Transverse colon (tissue), 4 donors: ENCODE measurements at regions of chr16 and their contacts with region 1.

Region 1: GRCh38 chr16:8797364-8798173 is at the starts of genes PMM2 and TMEM186:
- DNase-seq: peak; percentile 97
- H3K4me3 ChIP-seq: peak within 1 kb of the TSS; percentile 72 to 91 (median 84)
- H3K27ac ChIP-seq: peak within 1 kb of the TSS; percentile 86 to 92 (median 90)
- H3K4me1 ChIP-seq: peaks cover 21 to 47% (median 42%) of the 10 kb centered on the region in 4 donors
- H3K27me3 ChIP-seq: no peaks in the 10 kb centered on the region
- CTCF ChIP-seq: peak in 2 of 5 experiments; percentile 14 to 16
- EP300 ChIP-seq: no peak
- POLR2A ChIP-seq: peak; percentile 72
- total RNA-seq, gene PMM2: 26.2 to 114 (median 58.5) TPM
- total RNA-seq, gene TMEM186: 1.8 to 10.3 (median 9.7) TPM in 3 of 4 donors, not detected in the other

Region 2: DNA sequence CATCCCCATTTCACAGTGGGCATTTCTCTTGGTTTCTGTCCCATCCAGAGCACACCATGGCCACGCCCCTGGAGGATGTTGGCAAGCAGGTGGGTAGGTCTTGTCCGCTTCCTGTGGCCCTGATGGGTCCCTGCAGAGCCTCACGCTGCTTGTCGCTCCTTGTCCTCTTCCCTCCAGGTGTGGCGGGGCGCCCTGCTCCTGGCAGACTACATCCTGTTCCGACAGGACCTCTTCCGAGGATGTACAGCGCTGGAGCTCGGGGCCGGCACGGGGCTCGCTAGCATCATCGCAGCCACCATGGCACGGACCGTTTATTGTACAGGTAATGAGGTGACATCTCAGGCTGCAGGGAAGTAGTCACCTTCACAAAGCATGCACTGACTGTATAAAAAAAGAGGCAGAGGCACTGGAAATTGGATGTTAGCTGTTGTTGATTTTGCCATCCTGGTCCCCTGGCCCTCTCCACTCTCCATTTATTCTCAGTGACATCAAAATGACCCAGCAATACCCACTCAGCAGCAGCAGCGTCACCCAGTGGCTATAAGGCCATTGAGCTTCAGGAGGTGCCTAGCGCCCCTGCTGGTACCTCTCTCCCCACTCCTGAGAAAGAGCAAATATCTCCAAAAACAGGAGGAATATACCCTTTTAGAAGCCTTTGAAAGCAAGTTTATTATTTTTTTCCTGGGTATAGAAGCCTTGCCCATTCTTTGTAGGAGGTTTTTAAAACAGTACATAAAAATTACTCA is 162.4 kb before region 1 on chr16:
- in situ Hi-C with region 1: no loop called
- intact Hi-C with region 1: no loop called
- DNase-seq: no peak
- H3K4me3 ChIP-seq: no peak overlapping the region
- H3K27ac ChIP-seq: no peak overlapping the region
- H3K4me1 ChIP-seq: no peaks in the 10 kb centered on the region
- H3K27me3 ChIP-seq: no peaks in the 10 kb centered on the region
- CTCF ChIP-seq: peak; percentile 16 to 45 (median 35)
- EP300 ChIP-seq: no peak
- POLR2A ChIP-seq: no peak

Region 3: DNA sequence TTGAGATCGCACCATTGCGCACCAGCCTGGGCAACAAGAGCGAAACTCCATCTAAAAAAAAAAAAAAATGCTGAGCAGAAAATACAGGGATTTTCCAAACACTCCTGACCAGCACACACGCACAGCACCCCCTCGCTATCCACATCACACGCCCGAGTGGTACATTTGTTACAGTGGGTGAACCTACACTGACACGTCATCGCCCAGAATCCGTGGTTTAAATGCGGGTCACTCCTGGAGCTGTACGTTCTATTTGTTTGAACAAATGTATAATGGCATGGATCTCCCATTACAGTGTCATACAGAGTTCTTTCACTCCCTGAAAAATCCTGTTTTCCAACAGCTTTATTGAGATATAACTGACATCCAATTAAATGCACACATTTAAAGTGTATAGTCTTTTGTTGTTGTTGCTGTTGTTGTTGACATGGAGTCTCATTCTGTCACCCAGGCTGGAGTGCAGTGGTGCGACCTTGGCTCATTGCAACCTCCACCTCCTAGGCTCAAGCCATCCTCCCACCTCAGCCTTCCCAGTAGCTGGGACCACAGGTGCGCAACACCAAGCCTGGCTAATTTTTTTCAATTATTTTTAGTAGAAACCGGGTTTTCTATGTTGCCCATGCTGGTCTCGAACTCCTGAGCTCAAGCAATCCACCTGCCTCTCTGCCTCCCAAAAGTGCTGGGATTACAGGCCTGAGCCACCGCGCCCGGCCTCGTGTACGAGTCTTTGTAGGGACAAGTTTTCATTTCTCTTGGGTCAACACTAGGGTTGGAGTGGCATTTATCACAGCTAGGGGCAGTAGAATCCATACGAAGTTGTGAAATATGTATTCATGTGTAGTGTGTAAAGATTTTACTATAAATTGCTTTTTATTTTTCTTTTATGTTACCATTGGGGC is 75.6 kb after region 1 on chr16:
- in situ Hi-C with region 1: loop called in 1 of 4 experiments (anchors 10 kb)
- intact Hi-C with region 1: loop called (anchors 5 kb)
- DNase-seq: no peak
- H3K4me3 ChIP-seq: no peak overlapping the region
- H3K27ac ChIP-seq: no peak overlapping the region
- H3K4me1 ChIP-seq: peaks cover 0 to 19% (median 6%) of the 10 kb centered on the region in 4 donors
- H3K27me3 ChIP-seq: no peaks in the 10 kb centered on the region
- CTCF ChIP-seq: peak; percentile 6 to 23 (median 19)
- EP300 ChIP-seq: no peak
- POLR2A ChIP-seq: no peak

Region 4: GRCh38 chr16:9499941-9500593 is 702.5 kb after region 1 on chr16:
- in situ Hi-C with region 1: no loop called
- intact Hi-C with region 1: no loop called
- DNase-seq: no peak
- H3K4me3 ChIP-seq: no peak overlapping the region
- H3K27ac ChIP-seq: no peak overlapping the region
- H3K4me1 ChIP-seq: no peaks in the 10 kb centered on the region
- H3K27me3 ChIP-seq: no peaks in the 10 kb centered on the region
- CTCF ChIP-seq: no peak
- EP300 ChIP-seq: no peak
- POLR2A ChIP-seq: no peak